Activated CD4-positive, alpha-beta T cell treated with anti-CD3 and anti-CD28 coated beads, Interleukin-2, amount 10 ng/mL, durations not matched to agents 24 days and 14 days (primary cell): ENCODE measurements at regions of chr15 and their contacts with region 1.

Region 1: GRCh38 chr15:38690689-38691332 is 126.2 kb upstream of the RASGRP1 start:
- DNase-seq: peak; percentile 94
- H3K4me3 Mint-ChIP-seq: no peak overlapping the region
- H3K27ac Mint-ChIP-seq: peak overlapping the region; percentile 54
- H3K4me1 Mint-ChIP-seq: peaks cover 75% of the 10 kb centered on the region
- H3K27me3 Mint-ChIP-seq: no peaks in the 10 kb centered on the region

Region 2: GRCh38 chr15:38440353-38441129 is 250.3 kb before region 1 on chr15:
- intact Hi-C with region 1: loop called (anchors 1 kb)
- DNase-seq: peak; percentile 86
- H3K4me3 Mint-ChIP-seq: no peak overlapping the region
- H3K27ac Mint-ChIP-seq: peak overlapping the region; percentile 32
- H3K4me1 Mint-ChIP-seq: peaks cover 9% of the 10 kb centered on the region
- H3K27me3 Mint-ChIP-seq: peaks cover 42% of the 10 kb centered on the region

Region 3: GRCh38 chr15:38474155-38474757 is 216.6 kb before region 1 on chr15:
- intact Hi-C with region 1: loop called (anchors 1 kb)
- DNase-seq: peak; percentile 85
- H3K4me3 Mint-ChIP-seq: no peak overlapping the region
- H3K27ac Mint-ChIP-seq: no peak overlapping the region
- H3K4me1 Mint-ChIP-seq: peaks cover 13% of the 10 kb centered on the region
- H3K27me3 Mint-ChIP-seq: no peaks in the 10 kb centered on the region

Region 4: DNA sequence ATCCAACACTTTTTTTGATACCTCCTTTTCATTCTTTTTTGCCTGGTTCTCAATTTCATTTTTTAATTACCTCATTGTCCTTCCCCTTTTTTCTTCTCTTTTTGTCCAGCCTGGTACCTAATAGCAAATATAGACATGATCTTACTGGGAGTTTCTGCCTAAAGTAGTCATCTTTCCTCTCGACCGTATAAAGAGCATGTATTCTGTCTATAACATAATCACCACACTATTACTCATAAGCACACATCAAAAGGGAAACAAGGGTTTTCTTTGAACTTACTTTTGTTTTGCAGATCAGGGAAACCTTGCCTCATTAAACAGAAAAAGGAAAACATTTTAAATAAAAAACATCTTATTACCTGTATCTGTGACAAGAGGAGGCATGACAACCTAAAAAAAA is 203.9 kb before region 1 on chr15:
- intact Hi-C with region 1: loop called (anchors 1 kb)
- DNase-seq: peak; percentile 53
- H3K4me3 Mint-ChIP-seq: peak overlapping the region; percentile 66
- H3K27ac Mint-ChIP-seq: peak overlapping the region; percentile 91
- H3K4me1 Mint-ChIP-seq: peaks cover 30% of the 10 kb centered on the region
- H3K27me3 Mint-ChIP-seq: no peaks in the 10 kb centered on the region

Region 5: GRCh38 chr15:38631126-38632075 is 59.4 kb before region 1 on chr15:
- intact Hi-C with region 1: loop called (anchors 1 kb)
- DNase-seq: no peak
- H3K4me3 Mint-ChIP-seq: peak overlapping the region; percentile 53
- H3K27ac Mint-ChIP-seq: peak overlapping the region; percentile 77
- H3K4me1 Mint-ChIP-seq: peaks cover 47% of the 10 kb centered on the region
- H3K27me3 Mint-ChIP-seq: no peaks in the 10 kb centered on the region